Activated naive CD4-positive, alpha-beta T cell treated with anti-CD3 and anti-CD28 coated beads for 36 hours (primary cell): ENCODE measurements at regions of chr20 and their contacts with region 1.

Region 1: DNA sequence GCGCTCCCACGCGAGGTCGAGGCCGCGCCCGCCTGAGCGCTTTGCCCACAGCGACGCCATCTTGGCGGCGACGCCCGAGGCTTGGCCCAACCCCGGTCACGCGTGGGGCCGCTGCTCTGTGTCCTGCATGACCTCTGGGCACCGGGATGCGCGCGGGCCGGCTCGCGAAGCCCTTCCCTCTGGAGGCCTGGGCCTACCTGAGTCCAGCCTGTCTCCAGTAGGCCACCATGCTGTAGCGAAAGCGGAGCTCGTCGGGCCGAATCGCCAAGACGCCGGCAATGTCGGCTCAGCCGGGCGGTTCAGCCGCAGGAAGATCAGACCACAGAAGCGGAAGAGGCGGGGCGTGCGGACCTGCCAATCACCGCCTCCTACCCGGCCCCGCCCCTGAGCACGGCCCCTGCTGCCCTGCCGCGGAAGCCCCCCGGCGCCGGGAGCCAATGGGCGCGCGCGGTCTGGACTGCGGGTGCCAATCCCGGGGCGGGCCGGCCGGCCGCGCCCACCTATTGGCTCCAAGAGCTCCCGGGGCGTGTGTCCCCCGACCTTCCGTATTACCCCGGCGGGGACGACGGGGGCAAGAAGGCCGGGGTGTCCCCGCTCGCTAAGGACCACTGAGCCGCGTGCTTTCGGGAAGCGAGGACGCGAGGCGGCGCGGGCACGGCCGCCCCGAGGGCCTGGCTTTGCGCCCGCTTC is at the start of gene ATP5F1E:
- DNase-seq: peak; percentile 95
- H3K4me3 Mint-ChIP-seq: peak within 1 kb of the TSS; percentile 94
- H3K27ac Mint-ChIP-seq: peak within 1 kb of the TSS; percentile 93
- H3K4me1 Mint-ChIP-seq: peaks cover 75% of the 10 kb centered on the region
- H3K27me3 Mint-ChIP-seq: no peaks in the 10 kb centered on the region
- total RNA-seq, gene ATP5F1E: 74.5 to 86.3 TPM

Region 2: GRCh38 chr20:58388882-58389323 is 643.3 kb before region 1 on chr20 and contains the start of gene VAPB:
- CTCF ChIA-PET with region 1: interaction called, 4 read pairs
- intact Hi-C with region 1: loop called (anchors 10 kb)
- DNase-seq: peak; percentile 96
- H3K4me3 Mint-ChIP-seq: peak within 1 kb of the TSS; percentile 96
- H3K27ac Mint-ChIP-seq: peak within 1 kb of the TSS; percentile 90
- H3K4me1 Mint-ChIP-seq: peaks cover 42% of the 10 kb centered on the region
- H3K27me3 Mint-ChIP-seq: no peaks in the 10 kb centered on the region
- total RNA-seq, gene VAPB: 26.8 to 27.9 TPM

Region 3: GRCh38 chr20:58907399-58908137 is 124.6 kb before region 1 on chr20:
- CTCF ChIA-PET with region 1: no interaction called
- intact Hi-C with region 1: loop called (anchors 5 kb)
- DNase-seq: peak; percentile 65
- H3K4me3 Mint-ChIP-seq: peak overlapping the region; percentile 66
- H3K27ac Mint-ChIP-seq: peak overlapping the region; percentile 88
- H3K4me1 Mint-ChIP-seq: peaks cover 45% of the 10 kb centered on the region
- H3K27me3 Mint-ChIP-seq: no peaks in the 10 kb centered on the region

Region 4: GRCh38 chr20:59006864-59007664 is 25.1 kb before region 1 on chr20 and contains the start of gene CTSZ:
- CTCF ChIA-PET with region 1: no interaction called
- intact Hi-C with region 1: loop called (anchors 1 kb)
- DNase-seq: peak; percentile 43
- H3K4me3 Mint-ChIP-seq: peak within 1 kb of the TSS; percentile 73
- H3K27ac Mint-ChIP-seq: no peak within 1 kb of the TSS
- H3K4me1 Mint-ChIP-seq: peaks cover 31% of the 10 kb centered on the region
- H3K27me3 Mint-ChIP-seq: no peaks in the 10 kb centered on the region
- total RNA-seq, gene CTSZ: 17.3 to 17.9 TPM

Region 5: DNA sequence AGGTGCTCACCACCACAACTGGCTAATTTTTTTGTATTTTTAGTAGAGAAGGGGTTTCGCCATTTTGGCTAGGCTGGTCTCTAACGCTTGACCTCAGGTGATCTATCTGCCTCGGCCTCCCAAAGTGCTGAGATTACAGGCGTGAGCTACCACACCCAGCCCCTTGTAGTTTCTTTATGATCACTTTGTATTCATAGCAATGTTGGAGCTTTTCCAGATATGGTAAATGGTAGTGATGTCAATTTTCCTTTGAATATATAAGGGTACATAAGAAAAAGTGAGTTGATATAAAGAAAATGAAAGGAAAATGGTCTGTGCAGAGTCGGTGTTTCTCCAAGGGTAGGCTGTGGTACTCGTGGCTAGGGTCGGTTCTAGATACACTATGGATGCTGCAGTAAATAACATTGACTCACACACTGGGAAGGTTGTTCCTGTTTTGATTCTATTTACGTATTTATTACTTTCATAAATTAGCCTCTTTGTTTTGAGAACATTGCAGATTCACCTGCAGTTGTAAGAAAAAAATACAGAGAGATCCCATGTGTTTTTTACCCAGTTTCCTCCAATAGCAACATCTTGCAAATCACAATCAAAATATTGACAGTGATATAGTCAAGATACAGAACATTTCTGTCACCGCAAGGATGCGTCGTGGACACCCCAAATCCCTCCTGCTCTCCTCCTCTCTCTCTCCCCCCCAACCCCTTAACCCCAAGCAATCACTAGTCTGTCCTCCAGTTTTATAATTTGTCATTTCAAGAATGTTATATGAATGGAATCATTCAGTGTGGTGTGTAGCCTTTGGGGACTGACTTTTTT is 133.9 kb after region 1 on chr20:
- CTCF ChIA-PET with region 1: interaction called, 10 read pairs
- intact Hi-C with region 1: no loop called
- DNase-seq: peak; percentile 49
- H3K4me3 Mint-ChIP-seq: peak overlapping the region; percentile 78
- H3K27ac Mint-ChIP-seq: peak overlapping the region; percentile 94
- H3K4me1 Mint-ChIP-seq: peaks cover 81% of the 10 kb centered on the region
- H3K27me3 Mint-ChIP-seq: no peaks in the 10 kb centered on the region